Dendritic cell treated with granulocyte-macrophage colony-stimulating factor and Interleukin-4, amounts not matched to agents 40 ng/mL and 50 ng/mL, for 4 days (primary cell): ENCODE measurements at regions of chr13 and their contacts with region 1.

Region 1: DNA sequence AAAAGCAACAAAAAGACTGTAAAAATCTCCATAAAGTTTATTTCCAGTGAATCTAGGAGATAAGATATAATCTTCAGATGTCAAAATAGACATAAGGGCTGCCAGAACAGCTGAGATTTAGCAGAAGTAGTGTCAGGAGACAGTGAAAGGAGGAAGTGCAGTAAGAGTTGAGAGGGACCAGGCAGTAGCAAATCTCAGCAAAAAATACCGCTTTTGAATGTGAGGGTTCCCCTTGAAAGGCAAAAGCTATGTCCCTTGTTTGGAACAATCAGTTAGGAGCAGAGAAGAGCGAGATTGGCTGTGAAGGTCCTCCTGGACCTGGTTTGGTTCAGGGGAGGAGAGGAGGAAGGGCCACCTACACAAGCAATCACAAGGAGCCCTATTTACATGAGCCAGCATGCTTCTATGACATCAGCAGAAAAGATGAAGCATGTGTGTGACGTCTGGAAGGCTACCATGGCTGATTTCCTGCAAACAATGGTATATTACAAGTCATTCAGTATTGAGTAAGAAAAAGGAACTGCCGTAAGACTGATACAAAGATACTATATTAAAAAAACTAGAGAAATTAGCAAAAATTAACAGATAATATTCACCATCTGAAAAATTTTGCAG is 98.9 kb upstream of the SIAH3 start:
- H3K4me3 Mint-ChIP-seq: peak overlapping the region; percentile 24
- H3K27ac Mint-ChIP-seq: peak overlapping the region; percentile 94
- H3K4me1 Mint-ChIP-seq: peaks cover 37% of the 10 kb centered on the region
- H3K27me3 Mint-ChIP-seq: peaks cover 6% of the 10 kb centered on the region

Region 2: DNA sequence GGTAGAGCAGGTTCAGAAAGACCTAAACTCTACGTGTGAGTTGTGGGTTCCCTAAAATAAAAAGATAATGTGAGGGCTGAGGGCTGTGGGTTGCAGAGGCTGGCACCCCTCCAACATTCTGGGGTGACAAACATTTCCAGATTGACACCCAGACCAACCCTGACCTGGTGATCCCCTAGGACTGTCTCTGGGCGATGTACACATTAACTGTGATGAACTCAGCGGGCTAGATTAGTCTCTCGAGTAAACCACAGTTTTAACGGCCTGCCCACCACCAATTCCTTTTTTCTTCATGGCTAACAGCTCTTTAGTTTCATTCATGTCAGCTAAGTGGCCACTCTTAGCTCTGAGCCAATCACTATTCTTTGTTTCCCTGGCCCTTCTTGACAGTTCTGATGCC is 123.8 kb before region 1 on chr13:
- intact Hi-C with region 1: loop called (anchors 10 kb)
- H3K4me3 Mint-ChIP-seq: no peak overlapping the region
- H3K27ac Mint-ChIP-seq: no peak overlapping the region
- H3K4me1 Mint-ChIP-seq: peaks cover 50% of the 10 kb centered on the region
- H3K27me3 Mint-ChIP-seq: no peaks in the 10 kb centered on the region